Motor neuron (in vitro differentiated cells): ENCODE measurements at regions of chr5 and their contacts with region 1.

Region 1: DNA sequence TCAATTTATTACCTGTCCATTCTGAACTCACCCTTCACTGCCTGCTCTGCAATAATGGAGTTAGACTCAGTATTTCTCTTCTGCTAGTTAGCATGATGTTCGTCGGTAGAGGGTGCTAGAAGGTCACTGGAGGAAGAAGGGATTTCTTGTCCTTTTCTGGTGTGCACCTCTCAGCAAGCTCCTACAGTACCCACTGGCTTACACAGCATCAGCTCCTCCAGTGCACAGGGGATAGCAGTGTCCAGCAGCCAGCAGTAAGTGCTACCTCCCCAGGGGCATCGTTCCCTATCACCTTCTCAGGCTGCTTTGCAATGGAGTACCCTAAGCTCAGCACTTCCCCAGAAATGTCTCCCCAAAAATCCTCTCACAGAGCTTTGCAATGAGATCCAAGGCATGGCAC is 45.9 kb upstream of the APC start:
- ATAC-seq: peak in 3 of 8 experiments; percentile 75 to 87 (median 80)
- H3K4me3 ChIP-seq: no peak overlapping the region
- H3K27ac ChIP-seq: no peak overlapping the region
- H3K4me1 ChIP-seq: no peaks in the 10 kb centered on the region

Region 2: GRCh38 chr5:112757468-112758208 is 65.9 kb after region 1 on chr5:
- in situ Hi-C with region 1: loop called in 1 of 9 experiments (anchors 10 kb)
- ATAC-seq: peak in 6 of 8 experiments; percentile 43 to 82 (median 70)
- H3K4me3 ChIP-seq: no peak overlapping the region
- H3K27ac ChIP-seq: no peak overlapping the region
- H3K4me1 ChIP-seq: no peaks in the 10 kb centered on the region

Region 3: GRCh38 chr5:113005454-113005853 is 313.7 kb after region 1 on chr5:
- in situ Hi-C with region 1: no loop called
- ATAC-seq: no peak
- H3K4me3 ChIP-seq: no peak overlapping the region
- H3K27ac ChIP-seq: no peak overlapping the region
- H3K4me1 ChIP-seq: no peaks in the 10 kb centered on the region

Region 4: DNA sequence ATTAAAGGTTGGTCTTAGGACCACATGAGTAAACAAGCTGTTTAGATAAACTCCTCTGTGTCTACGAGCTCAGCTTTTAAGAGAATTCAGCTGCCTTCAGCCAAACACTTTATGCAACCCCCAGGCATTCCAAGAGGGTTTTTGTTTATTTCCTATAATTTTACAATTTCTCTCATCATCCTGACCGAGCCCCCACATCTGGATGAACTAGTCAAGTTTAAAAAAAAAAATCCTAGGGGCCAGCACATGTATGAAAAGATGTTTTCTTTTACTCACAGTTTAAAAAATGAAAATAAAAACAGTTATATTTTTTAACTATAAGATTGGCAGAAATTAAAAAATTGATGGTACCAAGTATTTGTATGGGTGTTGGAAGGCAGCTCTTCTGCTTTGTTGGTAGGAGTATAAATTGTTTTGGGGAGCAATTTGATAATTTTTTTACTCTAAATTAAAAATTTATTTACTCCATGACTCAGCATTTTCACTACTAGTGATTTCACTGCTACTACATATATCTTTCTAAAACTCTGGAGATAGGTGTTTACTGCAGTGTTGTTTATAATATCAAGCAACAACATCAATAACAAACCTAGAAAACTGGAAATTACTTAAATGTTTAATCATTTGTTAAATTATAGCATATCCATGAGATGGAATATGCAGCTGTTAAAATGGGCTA is 839.9 kb after region 1 on chr5:
- in situ Hi-C with region 1: no loop called
- ATAC-seq: no peak
- H3K4me3 ChIP-seq: no peak overlapping the region
- H3K27ac ChIP-seq: no peak overlapping the region
- H3K4me1 ChIP-seq: no peaks in the 10 kb centered on the region